Ascending aorta (tissue), 2 donors: ENCODE measurements at regions of chr1 and their contacts with region 1.

Region 1: GRCh38 chr1:44029906-44030604 is 1.2 kb downstream of the SLC6A9 start:
- DNase-seq: peak; percentile 43 to 95
- H3K4me3 ChIP-seq: peak overlapping the region; percentile 75 to 76
- H3K27ac ChIP-seq: peak overlapping the region; percentile 75 to 93
- H3K4me1 ChIP-seq: peaks cover 0 to 12% of the 10 kb centered on the region in 2 donors
- H3K27me3 ChIP-seq: no peaks in the 10 kb centered on the region
- CTCF ChIP-seq: no peak

Region 2: DNA sequence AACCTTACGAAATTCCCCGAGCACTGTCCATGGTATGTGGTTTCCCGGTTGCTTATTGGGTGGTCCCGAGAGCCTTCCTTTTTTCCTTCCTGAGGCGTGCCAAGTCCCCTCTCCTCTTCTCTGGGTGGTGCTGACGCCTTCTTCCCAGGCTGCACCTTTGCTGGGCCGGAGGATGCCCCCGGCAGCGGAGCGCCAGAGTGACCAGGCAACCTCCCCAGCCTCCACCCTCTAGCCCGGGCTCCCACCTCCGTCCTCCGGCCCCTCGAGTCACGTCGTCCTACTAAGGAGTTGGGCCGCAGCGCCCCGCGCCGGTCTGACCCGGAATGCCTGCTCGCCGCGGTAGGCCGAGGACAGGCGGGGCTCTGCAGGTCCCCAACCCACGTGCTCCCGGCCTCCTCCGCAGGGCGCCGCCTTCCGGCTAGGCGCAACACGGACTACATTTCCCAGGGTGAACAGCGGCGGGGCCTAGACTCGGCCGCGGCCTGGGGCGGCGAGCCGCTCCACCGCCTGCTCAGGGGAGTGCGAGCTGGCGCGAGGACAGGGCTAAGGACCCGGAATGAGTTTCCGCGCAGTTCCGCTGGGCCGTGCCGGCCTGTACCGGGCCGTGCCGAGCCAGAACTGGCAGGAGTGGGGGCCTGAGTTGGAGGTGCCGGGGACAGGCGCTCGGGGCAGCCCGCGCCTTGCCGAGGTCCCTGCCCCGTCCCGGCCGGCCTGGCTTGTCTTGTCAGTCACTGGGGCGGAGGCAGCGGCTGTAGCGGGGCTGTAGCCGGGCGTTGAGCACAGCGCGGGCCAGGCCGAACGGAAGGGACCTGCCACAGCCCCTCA is 83.6 kb before region 1 on chr1 and contains the start of gene IPO13:
- intact Hi-C with region 1: loop called (anchors 2 kb)
- DNase-seq: peak; percentile 84 to 97
- H3K4me3 ChIP-seq: peak within 1 kb of the TSS; percentile 81 to 85
- H3K27ac ChIP-seq: peak within 1 kb of the TSS; percentile 89 to 98
- H3K4me1 ChIP-seq: peaks cover 13 to 26% of the 10 kb centered on the region in 2 donors
- H3K27me3 ChIP-seq: no peaks in the 10 kb centered on the region
- CTCF ChIP-seq: peak; percentile 73 to 84 (median 80)
- total RNA-seq, gene IPO13: 6.2 TPM

Region 3: DNA sequence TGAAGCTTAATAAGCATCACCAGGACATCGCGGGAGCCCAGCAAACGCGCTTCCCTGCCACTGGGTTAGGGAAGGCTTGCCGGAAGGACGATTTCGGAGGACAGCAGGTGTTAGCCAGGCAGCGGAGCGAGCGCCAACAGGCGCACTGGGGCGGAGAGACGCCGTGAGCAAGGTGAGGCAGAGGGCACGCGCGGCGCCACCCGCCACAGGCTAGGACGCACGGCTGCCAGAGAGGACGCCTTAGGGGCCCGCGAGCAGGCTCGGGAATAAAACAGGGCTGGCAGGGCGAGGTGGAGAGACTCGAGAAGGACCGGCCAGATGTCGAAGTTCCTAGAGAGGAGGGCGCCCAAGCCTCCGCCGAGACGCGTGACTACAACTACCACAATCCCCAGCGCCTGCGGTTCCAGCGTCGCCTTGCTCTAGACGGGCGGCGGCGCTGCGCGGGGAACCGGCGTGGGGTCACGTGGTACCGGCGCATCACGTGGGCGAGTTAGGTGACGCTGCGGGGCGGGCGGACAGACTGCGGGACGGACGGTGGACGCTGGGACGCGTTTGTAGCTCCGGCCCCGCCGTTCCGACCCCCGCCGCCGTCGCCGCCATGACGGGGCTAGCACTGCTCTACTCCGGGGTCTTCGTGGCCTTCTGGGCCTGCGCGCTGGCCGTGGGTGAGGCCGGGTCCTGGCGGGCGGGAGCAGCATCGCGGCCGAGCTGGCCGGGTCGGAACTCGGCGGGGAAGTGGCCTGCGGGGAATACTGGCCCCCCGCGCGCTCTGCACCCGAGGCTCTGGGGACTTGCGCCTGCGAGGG is 55.4 kb before region 1 on chr1 and contains the start of gene ATP6V0B:
- intact Hi-C with region 1: loop called (anchors 2 kb)
- DNase-seq: peak; percentile 87 to 97
- H3K4me3 ChIP-seq: peak within 1 kb of the TSS; percentile 71 to 78
- H3K27ac ChIP-seq: peak within 1 kb of the TSS; percentile 84 to 89
- H3K4me1 ChIP-seq: peaks cover 17 to 35% of the 10 kb centered on the region in 2 donors
- H3K27me3 ChIP-seq: no peaks in the 10 kb centered on the region
- CTCF ChIP-seq: peak in 2 of 3 experiments; percentile 11 to 46
- total RNA-seq, gene ATP6V0B: 115 TPM

Region 4: DNA sequence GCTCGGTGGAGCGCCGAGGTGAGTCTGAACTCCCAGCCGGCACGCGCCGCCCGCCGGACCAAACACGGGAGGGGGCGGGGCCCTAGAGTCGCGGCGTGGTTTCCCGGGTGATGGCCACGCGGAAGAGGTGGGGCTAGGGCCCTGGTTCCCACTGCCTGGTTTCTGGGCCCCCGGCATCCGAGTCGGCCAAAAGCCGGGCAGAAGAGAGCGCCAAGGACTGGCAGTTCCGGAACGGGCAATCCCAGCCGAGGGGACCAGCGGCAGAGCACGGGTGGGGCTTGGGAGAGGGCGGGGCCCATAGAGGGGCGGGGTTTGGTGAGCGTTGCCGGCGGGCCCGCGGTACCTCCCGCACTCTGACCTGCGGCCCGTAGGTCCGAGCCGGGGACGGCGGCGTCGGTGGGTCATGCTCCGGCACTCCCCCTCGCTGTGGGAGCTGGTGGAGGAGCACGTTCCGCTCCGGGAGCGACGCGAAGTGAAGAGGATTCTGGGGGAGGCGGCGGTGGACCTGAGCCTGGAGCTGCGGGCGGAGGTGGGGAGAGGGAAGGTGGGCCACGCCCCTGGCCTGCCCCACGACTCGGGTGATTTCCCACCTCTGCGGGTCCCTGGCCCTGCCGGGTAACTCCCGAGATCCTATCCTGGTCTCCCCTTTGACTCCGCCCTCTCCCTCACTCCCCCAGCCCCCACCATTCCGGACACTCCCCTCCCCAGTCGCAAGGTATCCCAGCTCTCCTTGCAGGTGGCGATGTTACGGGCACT is 38.4 kb before region 1 on chr1 and contains the start of gene CCDC24:
- intact Hi-C with region 1: loop called (anchors 1 kb)
- DNase-seq: peak; percentile 69 to 95
- H3K4me3 ChIP-seq: peak within 1 kb of the TSS; percentile 71 to 72
- H3K27ac ChIP-seq: peak within 1 kb of the TSS; percentile 72 to 80
- H3K4me1 ChIP-seq: peaks cover 10 to 20% of the 10 kb centered on the region in 2 donors
- H3K27me3 ChIP-seq: no peaks in the 10 kb centered on the region
- CTCF ChIP-seq: no peak
- total RNA-seq, gene CCDC24: 4.8 TPM

Region 5: GRCh38 chr1:44002606-44003157 is 27.4 kb before region 1 on chr1:
- intact Hi-C with region 1: loop called (anchors 1 kb)
- DNase-seq: no peak
- H3K4me3 ChIP-seq: no peak overlapping the region
- H3K27ac ChIP-seq: no peak overlapping the region
- H3K4me1 ChIP-seq: peaks cover 3 to 4% of the 10 kb centered on the region in 2 donors
- H3K27me3 ChIP-seq: no peaks in the 10 kb centered on the region
- CTCF ChIP-seq: no peak

Region 6: GRCh38 chr1:44015206-44015605 is 14.8 kb before region 1 on chr1:
- intact Hi-C with region 1: loop called (anchors 2 kb)
- DNase-seq: peak in 1 of 2 donors; percentile 80
- H3K4me3 ChIP-seq: no peak overlapping the region
- H3K27ac ChIP-seq: peak overlapping the region; percentile 57 to 71
- H3K4me1 ChIP-seq: peaks cover 18 to 37% of the 10 kb centered on the region in 2 donors
- H3K27me3 ChIP-seq: no peaks in the 10 kb centered on the region
- CTCF ChIP-seq: no peak

Region 7: DNA sequence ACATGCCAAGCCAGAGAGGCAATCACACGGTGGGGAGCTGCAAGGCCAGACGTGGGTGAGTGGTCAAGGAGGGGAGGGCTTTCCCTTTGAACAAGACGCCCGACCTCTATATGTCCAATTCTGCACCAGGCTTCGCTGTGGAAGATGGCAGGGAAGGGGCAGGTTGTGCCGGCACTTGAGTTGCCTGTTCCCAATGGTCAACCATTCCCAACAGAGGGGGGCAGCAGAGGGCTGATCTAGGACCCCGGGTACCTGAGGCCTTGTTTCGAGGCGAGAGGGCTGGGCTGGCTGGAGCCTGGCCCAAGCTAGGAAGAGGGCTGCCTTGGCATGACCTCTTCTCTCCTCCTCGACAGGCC is 579.3 kb after region 1 on chr1:
- intact Hi-C with region 1: no loop called
- DNase-seq: peak in 1 of 2 donors; percentile 68
- H3K4me3 ChIP-seq: no peak overlapping the region
- H3K27ac ChIP-seq: no peak overlapping the region
- H3K4me1 ChIP-seq: no peaks in the 10 kb centered on the region
- H3K27me3 ChIP-seq: no peaks in the 10 kb centered on the region
- CTCF ChIP-seq: peak; percentile 50 to 63 (median 52)